ENCODE measurements at regions of chr6 and their contacts with region 1.

Region 1: DNA sequence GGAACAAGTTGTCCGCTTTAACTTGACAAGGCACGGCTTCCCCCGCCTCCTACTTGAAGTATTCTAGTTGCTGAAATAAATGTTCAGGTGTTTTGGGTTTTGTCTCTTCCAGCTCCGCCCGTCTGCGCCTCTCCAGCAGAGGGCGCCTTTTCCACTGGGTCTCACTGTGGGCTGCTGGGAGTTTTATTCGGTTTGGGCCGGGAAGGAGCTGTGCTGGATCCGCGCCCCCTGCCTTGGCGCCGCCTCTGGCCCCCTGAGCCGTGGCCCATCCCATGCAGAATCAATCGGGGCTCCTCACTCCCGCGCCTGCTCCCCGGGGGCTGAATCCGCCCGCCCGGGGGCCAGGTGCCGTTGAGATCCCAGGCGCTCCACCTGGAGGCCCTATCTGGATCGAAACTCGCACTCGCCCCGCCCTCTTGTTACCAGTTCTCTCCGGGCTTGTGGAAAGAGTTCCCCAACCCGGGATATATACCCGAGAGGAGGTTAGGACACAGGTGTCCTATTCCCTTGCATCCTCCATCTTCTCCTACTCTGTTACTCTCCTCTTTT is 51.0 kb upstream of the TCF21 start:
- DNase-seq: peak; percentile 58
- CTCF ChIP-seq: peak; percentile 77

Region 2: GRCh38 chr6:133701633-133702331 is 136.1 kb before region 1 on chr6:
- CTCF ChIA-PET with region 1: no interaction called
- POLR2A ChIA-PET with region 1: no interaction called
- DNase-seq: no peak
- CTCF ChIP-seq: no peak

Region 3: GRCh38 chr6:133820208-133820607 is 17.7 kb before region 1 on chr6:
- CTCF ChIA-PET with region 1: interaction called, 13 read pairs
- POLR2A ChIA-PET with region 1: no interaction called
- DNase-seq: no peak
- CTCF ChIP-seq: no peak

Region 4: GRCh38 chr6:133827766-133828165 is 10.1 kb before region 1 on chr6:
- CTCF ChIA-PET with region 1: interaction called, 13 read pairs
- POLR2A ChIA-PET with region 1: no interaction called
- DNase-seq: no peak
- CTCF ChIP-seq: no peak

Region 5: DNA sequence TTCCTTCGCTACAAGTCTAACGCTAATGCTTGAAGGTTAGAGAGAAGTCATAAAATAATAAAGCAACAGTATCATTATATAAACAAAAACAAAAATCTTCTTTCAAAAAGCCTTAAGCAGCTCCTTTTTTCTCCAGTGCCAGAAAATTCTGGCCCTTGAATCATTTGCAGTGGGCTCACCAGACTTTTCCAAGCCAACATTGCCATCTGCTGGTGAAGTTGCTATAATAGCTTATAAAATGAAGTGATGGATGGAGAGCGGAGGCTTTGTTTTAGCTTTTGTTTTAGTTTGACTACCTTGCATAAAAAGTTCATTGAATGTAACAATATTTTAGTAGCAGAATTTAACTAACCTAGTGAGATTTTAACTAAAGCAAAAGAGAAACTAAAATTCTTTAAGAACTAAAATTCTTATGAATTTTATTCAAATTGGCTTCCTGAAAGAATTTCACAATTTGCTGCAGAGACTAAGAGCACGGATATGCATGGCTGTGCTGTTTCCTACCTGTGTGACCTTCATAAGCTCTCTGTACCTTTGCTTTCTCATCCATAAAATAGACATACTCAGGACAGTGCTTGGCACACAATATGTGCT is 259.3 kb after region 1 on chr6:
- CTCF ChIA-PET with region 1: interaction called, 23 read pairs
- POLR2A ChIA-PET with region 1: no interaction called
- DNase-seq: peak; percentile 62
- CTCF ChIP-seq: peak; percentile 55

Region 6: DNA sequence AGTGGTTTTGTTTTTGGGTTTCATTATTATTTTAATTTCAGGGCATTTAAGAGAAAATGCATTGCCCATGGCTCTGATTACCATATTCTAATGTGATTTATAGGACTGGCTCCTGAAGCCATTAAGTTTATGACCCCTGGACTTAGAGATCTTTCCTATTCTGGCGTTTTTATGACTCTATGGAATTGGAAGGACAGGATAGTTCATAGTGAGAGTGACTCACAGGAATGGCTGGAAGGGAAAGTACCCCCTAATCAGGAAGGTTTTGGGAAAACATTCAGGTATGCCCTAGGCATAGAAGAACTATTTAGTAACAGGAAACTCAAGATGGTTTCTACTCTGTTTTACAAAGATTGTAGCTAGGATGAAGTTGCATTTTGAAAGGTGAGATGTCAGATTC is 323.2 kb after region 1 on chr6:
- CTCF ChIA-PET with region 1: no interaction called
- POLR2A ChIA-PET with region 1: no interaction called
- DNase-seq: no peak
- CTCF ChIP-seq: no peak